Activated CD4-positive, alpha-beta memory T cell treated with anti-CD3 and anti-CD28 coated beads, Interleukin-2, amount 10 ng/mL, durations not matched to agents 7 days and 5 days (primary cell): ENCODE measurements at regions of chr1 and their contacts with region 1.

Region 1: GRCh38 chr1:205485338-205486228 is 18.9 kb upstream of the CDK18 start:
- DNase-seq: peak; percentile 69
- H3K4me3 Mint-ChIP-seq: no peak overlapping the region
- H3K27ac Mint-ChIP-seq: no peak overlapping the region
- H3K4me1 Mint-ChIP-seq: peaks cover 16% of the 10 kb centered on the region
- H3K27me3 Mint-ChIP-seq: peaks cover 35% of the 10 kb centered on the region

Region 2: GRCh38 chr1:205313563-205314308 is 171.8 kb before region 1 on chr1:
- CTCF ChIA-PET with region 1: no interaction called
- POLR2A ChIA-PET with region 1: no interaction called
- DNase-seq: peak; percentile 24
- H3K4me3 Mint-ChIP-seq: peak overlapping the region; percentile 56
- H3K27ac Mint-ChIP-seq: peak overlapping the region; percentile 68
- H3K4me1 Mint-ChIP-seq: peaks cover 55% of the 10 kb centered on the region
- H3K27me3 Mint-ChIP-seq: no peaks in the 10 kb centered on the region

Region 3: DNA sequence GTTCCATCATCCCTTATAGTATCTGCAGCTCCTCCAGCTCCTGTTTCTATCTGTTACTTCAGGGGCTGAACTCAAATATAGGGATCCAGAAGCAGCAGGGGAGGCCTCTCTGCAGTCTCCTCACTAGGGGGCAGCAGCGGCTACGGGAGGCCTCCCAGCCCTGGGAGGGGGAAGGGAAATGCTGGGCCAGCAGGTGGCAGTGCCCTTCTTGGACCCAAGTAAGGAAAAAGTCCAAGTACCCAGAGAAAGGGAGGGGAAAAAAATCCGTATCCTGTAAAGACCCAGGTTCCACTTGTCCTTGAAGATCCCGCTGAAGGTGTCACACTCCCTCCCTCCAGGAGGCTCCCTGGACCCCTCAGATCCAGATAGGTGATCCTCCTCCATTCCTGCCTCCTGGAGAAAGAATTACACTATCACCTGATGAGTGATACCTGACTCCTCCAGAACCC is 149.9 kb before region 1 on chr1:
- CTCF ChIA-PET with region 1: interaction called, 22 read pairs
- POLR2A ChIA-PET with region 1: no interaction called
- DNase-seq: peak; percentile 83
- H3K4me3 Mint-ChIP-seq: no peak overlapping the region
- H3K27ac Mint-ChIP-seq: no peak overlapping the region
- H3K4me1 Mint-ChIP-seq: peaks cover 6% of the 10 kb centered on the region
- H3K27me3 Mint-ChIP-seq: peaks cover 33% of the 10 kb centered on the region

Region 4: GRCh38 chr1:205416322-205416721 is 69.3 kb before region 1 on chr1:
- CTCF ChIA-PET with region 1: interaction called, 12 read pairs
- POLR2A ChIA-PET with region 1: no interaction called
- DNase-seq: no peak
- H3K4me3 Mint-ChIP-seq: no peak overlapping the region
- H3K27ac Mint-ChIP-seq: no peak overlapping the region
- H3K4me1 Mint-ChIP-seq: no peaks in the 10 kb centered on the region
- H3K27me3 Mint-ChIP-seq: peaks cover 20% of the 10 kb centered on the region

Region 5: DNA sequence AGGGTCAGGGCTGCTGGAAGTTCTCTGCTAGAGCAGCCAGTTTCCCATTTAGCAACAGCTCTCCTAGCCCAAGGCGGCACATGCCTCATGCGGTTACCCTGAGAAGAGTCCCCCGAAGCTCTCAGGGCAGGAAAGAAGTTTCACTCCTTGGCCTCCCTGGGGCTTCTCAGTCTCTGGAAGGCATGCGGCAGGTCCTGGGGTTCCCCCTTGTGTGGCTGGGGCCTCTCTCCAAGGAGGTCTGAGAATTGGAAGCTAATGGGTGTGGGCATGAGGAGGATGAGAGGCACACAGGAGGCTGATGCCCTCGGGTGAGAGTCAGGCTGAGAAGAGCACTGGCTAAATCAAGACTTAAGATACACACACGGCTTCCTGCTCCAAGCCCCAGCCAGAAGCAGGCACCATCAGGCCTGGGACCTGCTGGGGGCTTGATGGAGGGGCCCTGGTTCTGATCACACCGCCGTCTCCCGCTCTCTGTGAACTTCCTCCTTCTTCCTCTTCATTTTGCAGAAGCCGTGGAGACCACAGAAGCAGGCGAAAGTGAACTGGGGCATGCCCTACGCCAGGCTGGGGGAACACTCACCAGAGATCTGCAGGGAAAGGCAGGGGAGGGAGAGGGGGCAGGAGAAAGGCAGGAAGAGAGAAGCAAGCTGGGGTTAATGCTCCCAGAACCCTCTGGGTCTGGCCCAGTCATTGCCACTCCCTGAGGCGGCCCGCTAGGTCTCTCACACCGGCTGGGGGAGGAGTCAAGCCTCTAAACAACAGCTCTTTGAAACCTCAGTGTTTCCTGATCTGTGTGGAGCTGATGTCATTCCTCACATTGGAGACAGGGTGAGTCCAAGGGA is 44.9 kb before region 1 on chr1:
- CTCF ChIA-PET with region 1: interaction called, 13 read pairs
- POLR2A ChIA-PET with region 1: no interaction called
- DNase-seq: peak; percentile 83
- H3K4me3 Mint-ChIP-seq: peak overlapping the region; percentile 72
- H3K27ac Mint-ChIP-seq: peak overlapping the region; percentile 88
- H3K4me1 Mint-ChIP-seq: peaks cover 26% of the 10 kb centered on the region
- H3K27me3 Mint-ChIP-seq: no peaks in the 10 kb centered on the region

Region 6: DNA sequence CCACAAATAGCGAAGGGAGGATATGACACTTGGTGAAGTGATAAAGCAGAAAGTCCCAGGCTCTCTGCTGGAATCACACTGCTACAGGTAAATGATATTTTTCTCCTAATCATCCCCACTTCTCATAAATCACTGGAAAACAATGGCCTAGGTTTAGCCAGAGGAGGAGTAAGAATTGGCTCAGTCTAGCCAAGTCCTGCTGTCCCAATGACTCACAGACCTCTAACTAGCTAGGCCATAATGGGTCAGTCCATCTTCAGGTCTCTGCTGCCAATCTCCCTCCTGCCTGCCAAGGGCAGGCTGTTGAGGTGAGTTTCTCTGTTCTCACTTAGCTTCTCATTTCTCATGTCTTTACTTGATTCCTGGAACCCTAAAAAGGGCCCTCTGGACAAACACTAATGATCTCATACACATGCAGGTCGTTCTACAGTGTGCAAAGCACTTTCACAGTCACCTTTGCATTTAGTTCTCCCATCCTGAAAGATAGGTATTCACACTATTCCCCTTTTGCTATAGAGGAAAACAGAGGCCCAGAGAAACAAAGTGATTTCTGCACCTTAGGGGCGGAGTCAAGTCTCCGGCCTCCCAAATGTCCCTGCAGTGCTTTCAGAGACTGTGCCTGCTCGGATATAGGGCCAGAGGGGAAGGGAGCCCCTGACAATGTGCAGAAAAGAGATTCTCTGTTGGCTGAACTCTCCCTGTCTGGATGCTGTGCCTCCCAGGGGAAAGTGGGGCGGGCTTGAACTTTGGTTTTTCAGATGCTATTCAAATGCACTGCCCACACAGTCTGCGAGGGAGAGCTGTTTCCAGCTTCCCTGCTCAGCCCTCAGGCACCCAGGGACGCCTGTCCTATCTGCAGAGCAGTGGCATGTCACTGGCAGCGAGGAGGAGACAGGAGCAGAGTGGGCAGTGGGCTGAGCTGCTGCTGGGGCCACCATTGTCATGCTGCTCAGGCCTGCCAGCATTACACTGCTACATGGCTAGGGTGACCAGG is 15.0 kb after region 1 on chr1:
- CTCF ChIA-PET with region 1: interaction called, 26 read pairs
- POLR2A ChIA-PET with region 1: no interaction called
- DNase-seq: no peak
- H3K4me3 Mint-ChIP-seq: no peak overlapping the region
- H3K27ac Mint-ChIP-seq: no peak overlapping the region
- H3K4me1 Mint-ChIP-seq: peaks cover 9% of the 10 kb centered on the region
- H3K27me3 Mint-ChIP-seq: peaks cover 23% of the 10 kb centered on the region

Region 7: DNA sequence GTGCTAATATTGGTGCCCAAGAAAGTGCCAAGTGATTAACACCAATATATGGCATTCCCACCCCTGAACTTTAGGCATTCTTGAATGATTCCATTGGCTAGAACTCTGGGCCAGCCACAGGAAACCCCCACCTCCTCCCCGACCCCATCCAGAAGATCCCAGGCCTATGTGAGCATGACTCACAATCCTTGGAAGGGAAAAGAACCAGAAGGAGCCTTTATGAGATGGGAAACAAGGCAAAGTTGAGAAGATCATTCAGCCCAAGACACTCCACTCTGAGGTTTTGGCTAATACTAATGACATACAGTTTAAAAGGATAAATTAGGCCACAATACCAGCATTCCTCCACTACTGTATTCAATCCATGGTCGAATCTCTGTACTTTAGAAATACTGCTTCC is 124.5 kb after region 1 on chr1:
- CTCF ChIA-PET with region 1: no interaction called
- POLR2A ChIA-PET with region 1: no interaction called
- DNase-seq: no peak
- H3K4me3 Mint-ChIP-seq: no peak overlapping the region
- H3K27ac Mint-ChIP-seq: no peak overlapping the region
- H3K4me1 Mint-ChIP-seq: peaks cover 32% of the 10 kb centered on the region
- H3K27me3 Mint-ChIP-seq: no peaks in the 10 kb centered on the region